ENCODE measurements at regions of chr7 and their contacts with region 1.

Region 1: DNA sequence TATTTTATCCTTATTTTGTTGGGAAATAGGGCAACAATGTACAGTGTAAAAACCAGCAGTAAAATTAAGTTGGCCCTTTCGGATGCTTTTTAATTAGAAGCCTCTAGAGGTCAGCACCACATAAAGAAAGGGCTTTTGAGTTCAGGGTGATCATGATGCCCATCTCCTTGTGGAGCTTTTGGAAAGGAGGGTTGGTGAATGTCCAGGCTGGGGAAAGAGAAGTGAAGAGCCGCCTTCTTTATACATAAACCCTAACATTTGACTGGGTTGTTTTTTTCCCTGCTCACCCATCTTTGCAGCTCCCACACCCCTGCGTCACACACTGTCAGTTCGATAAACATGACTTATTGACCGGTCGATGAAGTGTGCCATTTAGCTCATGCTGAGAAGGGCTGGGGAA is 29.8 kb downstream of the MTURN start:
- DNase-seq: peak; percentile 76
- H3K4me3 ChIP-seq: no peak overlapping the region
- H3K27ac ChIP-seq: no peak overlapping the region
- H3K4me1 ChIP-seq: peaks cover 22% of the 10 kb centered on the region
- H3K27me3 ChIP-seq: no peaks in the 10 kb centered on the region

Region 2: DNA sequence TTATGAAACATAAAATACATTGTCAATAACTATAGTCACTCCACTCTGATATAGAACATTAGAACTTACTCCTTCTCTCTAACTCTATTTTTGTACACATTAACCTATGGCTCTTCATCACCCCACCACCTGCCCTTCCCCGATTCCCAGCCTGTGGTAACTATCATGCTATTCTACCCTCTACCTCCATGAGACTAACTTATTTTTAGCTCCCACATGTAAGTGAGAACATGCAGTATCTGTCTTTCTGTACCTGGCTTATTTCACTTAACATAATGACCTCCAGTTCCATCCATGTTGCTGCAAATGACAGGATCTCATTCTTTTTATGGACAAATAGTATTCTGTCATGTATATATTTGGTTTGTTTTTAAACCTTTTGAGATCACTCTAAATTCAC is 322.8 kb after region 1 on chr7:
- in situ Hi-C with region 1: no loop called
- DNase-seq: no peak
- H3K4me3 ChIP-seq: no peak overlapping the region
- H3K27ac ChIP-seq: no peak overlapping the region
- H3K4me1 ChIP-seq: no peaks in the 10 kb centered on the region
- H3K27me3 ChIP-seq: no peaks in the 10 kb centered on the region

Region 3: GRCh38 chr7:30564243-30564892 is 399.8 kb after region 1 on chr7:
- in situ Hi-C with region 1: loop called (anchors 10 kb)
- DNase-seq: peak; percentile 82
- H3K4me3 ChIP-seq: no peak overlapping the region
- H3K27ac ChIP-seq: no peak overlapping the region
- H3K4me1 ChIP-seq: no peaks in the 10 kb centered on the region
- H3K27me3 ChIP-seq: no peaks in the 10 kb centered on the region

Measured in GM23248 (cell line).